ENCODE measurements at regions of chr21 and their contacts with region 1.

Region 1: GRCh38 chr21:45923146-45923545 is 58.4 kb upstream of the COL6A1 start:
- DNase-seq: peak; percentile 14
- H3K4me3 ChIP-seq: no peak overlapping the region
- H3K27me3 ChIP-seq: peaks cover 3% of the 10 kb centered on the region; the same call in 1 of the 2 replicates
- CTCF ChIP-seq: peak; percentile 92

Region 2: DNA sequence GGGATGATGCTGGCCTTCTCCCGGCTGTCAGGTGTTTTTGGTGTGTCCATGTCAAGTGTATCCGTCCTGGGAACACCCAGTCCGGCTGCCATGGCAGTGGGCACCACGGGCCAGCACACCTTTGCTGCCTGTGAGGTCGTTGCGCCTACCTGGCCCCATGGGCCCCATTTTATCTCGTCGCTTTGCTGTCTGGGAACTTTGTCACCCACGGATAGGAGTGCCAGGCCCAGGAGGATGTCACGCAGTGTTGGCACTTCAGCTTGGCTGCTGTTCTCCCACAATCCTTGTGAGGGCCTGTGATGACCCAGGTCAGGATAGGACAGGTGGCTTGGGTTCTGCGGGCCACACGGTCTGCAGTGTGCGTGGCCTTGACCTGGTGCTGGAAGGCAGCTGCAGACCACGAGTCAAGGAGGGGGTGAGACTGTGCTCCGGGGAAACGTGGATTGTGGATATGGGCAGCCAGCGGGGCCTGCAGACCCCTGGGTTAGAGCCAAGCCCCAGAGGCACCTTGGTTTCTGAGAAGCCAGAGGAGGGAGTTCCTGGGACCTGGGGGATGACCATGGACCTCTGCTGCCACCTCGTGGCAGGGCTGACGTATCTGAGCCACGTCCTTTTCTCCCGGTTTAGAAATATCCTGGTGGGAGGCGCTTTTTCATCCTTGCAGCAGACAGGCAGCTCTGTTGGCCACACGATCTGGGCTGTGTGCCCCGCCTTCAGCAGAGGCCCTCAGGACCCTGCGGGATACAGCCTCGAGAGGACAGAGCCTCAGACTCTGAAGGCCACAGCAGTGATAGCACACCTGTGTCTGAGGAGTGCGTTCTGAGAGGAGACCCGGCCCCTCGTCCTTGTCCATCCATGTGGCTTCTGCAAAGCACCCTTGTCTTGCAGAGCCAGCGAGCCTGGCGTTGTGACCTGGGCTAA is 102.7 kb before region 1 on chr21:
- CTCF ChIA-PET with region 1: interaction called, 25 read pairs
- POLR2A ChIA-PET with region 1: no interaction called
- DNase-seq: peak; percentile 19
- H3K4me3 ChIP-seq: no peak overlapping the region
- H3K27me3 ChIP-seq: peaks cover 14% of the 10 kb centered on the region
- CTCF ChIP-seq: peak; percentile 89

Region 3: GRCh38 chr21:45912611-45913417 is 10.3 kb before region 1 on chr21:
- CTCF ChIA-PET with region 1: interaction called, 13 read pairs
- POLR2A ChIA-PET with region 1: no interaction called
- DNase-seq: no peak
- H3K4me3 ChIP-seq: no peak overlapping the region
- H3K27me3 ChIP-seq: no peaks in the 10 kb centered on the region; the same call in 1 of the 2 replicates
- CTCF ChIP-seq: no peak

Region 4: DNA sequence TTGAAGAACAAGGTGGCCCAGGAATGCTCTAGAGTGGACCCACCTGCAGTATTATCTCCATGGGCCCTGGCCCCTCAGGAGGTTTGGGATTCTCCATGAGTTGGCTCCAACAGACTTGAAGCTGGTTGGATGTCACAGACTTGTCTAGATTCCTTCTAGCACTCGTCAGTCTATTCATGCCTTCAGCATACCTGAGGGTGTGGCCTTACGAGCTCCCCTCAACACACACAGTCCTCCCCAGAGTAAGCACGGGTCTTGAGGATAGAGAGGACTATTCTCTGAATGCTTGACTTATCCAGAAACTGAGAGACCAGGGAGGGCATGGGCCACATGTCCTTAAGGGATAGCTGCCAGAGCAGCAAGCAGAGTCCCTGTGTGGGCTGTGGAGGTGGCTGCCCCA is 12.5 kb after region 1 on chr21:
- CTCF ChIA-PET with region 1: interaction called, 14 read pairs
- POLR2A ChIA-PET with region 1: no interaction called
- DNase-seq: no peak
- H3K4me3 ChIP-seq: no peak overlapping the region
- H3K27me3 ChIP-seq: no peaks in the 10 kb centered on the region; the same call in 1 of the 2 replicates
- CTCF ChIP-seq: no peak

Region 5: DNA sequence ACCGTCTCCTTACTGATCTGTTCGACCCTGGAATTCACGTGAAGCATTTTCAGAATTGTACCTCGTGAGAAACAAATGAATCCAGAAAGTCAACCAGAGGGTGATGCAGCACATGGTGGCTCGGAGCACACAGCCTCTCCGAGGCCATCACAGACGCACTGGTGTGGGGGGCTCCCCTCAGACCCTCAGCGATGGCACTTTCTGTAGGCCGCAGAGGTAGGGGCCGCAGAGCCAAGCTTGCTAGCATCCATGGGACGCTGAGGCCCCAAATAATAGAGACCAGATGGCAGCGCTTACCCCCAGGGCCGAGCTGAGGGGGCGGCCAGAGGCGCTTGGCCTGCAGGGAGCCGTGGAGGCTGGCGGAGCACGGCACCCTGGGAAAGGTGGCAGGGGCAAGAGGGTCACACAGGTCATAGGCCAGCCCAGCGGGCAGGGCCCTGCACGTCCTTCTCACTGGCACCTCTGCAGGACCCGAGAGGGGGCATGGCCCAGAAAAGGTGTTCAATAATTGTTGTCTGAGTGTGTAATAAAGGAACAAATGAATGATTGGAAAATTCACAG is 146.7 kb after region 1 on chr21:
- CTCF ChIA-PET with region 1: no interaction called
- POLR2A ChIA-PET with region 1: no interaction called
- DNase-seq: no peak
- H3K4me3 ChIP-seq: no peak overlapping the region
- H3K27me3 ChIP-seq: no peaks in the 10 kb centered on the region
- CTCF ChIP-seq: no peak

Region 6: DNA sequence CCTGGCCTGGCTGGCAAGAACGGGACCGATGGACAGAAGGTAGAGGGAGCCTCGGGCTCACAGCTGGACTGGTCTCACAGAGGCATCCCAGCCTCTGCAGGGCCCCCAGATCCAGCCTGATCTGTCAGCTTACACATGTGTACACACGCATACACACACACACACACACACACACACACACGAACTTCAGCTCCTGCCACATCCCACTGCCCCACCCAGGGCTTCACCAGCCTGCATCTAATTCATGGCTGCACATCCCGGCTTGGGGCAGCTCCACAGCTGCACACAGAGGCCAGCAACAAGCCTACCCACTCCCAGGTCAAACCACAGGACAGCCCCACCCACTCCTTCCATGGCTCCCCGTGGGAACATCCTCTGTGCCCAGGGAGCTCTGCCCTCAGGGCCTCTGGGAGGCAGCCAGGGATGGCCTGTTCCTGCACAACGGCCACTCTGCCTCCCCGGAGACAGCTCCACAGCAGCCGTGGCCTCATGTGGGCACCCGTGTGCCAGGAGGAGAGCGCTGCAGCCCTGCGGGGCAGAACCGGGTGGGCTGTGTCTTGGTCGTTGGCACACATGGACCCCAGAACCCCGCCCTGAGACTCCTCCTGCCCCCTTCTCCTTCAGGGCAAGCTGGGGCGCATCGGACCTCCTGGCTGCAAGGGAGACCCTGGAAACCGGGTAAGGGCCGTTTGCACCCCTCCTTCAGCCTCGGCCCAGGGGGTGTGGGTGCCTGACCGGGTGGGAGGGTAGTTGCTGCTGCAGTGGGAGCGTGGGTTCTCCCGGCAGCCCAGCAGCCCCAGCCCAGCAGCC is 193.8 kb after region 1 on chr21:
- CTCF ChIA-PET with region 1: no interaction called
- POLR2A ChIA-PET with region 1: no interaction called
- DNase-seq: no peak
- H3K4me3 ChIP-seq: no peak overlapping the region
- H3K27me3 ChIP-seq: no peaks in the 10 kb centered on the region
- CTCF ChIP-seq: no peak

Measured in BJ (cell line).